Dendritic cell treated with granulocyte-macrophage colony-stimulating factor and Interleukin-4, amounts not matched to agents 40 ng/mL and 50 ng/mL, for 4 days (primary cell): ENCODE measurements at regions of chr16 and their contacts with region 1.

Region 1: GRCh38 chr16:19167710-19168370 is at the start of gene SYT17:
- H3K4me3 Mint-ChIP-seq: peak within 1 kb of the TSS; percentile 84
- H3K27ac Mint-ChIP-seq: peak within 1 kb of the TSS; percentile 79
- H3K4me1 Mint-ChIP-seq: peaks cover 23% of the 10 kb centered on the region
- H3K27me3 Mint-ChIP-seq: peaks cover 25% of the 10 kb centered on the region

Region 2: GRCh38 chr16:19130852-19131810 is 36.7 kb before region 1 on chr16:
- intact Hi-C with region 1: loop called (anchors 5 kb)
- H3K4me3 Mint-ChIP-seq: peak overlapping the region; percentile 61
- H3K27ac Mint-ChIP-seq: peak overlapping the region; percentile 93
- H3K4me1 Mint-ChIP-seq: peaks cover 74% of the 10 kb centered on the region
- H3K27me3 Mint-ChIP-seq: no peaks in the 10 kb centered on the region

Region 3: DNA sequence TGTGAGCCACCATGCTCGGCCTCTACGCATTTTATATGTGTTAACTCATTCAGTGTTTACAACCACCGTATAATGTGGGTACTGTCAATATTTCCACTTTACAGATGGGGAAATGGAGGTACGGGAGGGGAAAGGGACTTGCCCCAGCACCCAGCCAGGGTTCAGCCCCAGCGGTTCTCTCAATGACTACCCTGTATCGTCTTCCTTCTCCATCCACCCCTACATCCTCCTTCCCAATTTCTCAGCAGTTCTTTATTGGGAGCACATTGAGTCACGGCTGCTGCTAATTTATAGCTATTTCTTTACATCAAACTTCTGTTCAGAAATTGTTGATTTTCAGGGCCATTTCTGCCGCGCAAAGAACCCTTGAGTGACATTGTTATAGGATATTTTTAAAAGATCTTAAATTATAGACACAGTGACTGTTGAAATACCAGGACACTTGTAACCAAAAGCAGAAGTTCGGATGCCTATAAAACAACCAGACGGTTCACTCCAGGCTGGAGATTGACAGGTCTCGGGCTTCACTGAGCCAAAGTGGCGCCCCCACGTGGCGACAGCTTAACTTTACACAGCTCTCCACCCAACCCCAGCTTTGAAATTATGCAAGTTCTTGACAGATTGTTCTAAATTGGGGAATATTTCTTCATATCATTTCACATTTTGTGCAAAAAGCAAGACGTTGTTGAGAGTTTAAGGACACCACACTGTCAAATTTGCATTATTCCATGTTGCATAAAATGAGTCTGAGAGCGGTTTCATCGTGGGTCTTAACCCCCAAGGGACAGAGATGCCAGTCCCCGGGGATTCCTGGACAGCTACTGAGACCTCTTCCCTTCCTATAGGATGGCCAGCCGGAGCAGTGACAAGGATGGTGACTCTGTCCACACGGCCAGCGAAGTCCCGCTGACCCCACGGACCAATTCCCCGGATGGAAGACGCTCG is 12.0 kb after region 1 on chr16:
- intact Hi-C with region 1: loop called (anchors 1 kb)
- H3K4me3 Mint-ChIP-seq: peak overlapping the region; percentile 52
- H3K27ac Mint-ChIP-seq: peak overlapping the region; percentile 86
- H3K4me1 Mint-ChIP-seq: peaks cover 65% of the 10 kb centered on the region
- H3K27me3 Mint-ChIP-seq: no peaks in the 10 kb centered on the region

Region 4: DNA sequence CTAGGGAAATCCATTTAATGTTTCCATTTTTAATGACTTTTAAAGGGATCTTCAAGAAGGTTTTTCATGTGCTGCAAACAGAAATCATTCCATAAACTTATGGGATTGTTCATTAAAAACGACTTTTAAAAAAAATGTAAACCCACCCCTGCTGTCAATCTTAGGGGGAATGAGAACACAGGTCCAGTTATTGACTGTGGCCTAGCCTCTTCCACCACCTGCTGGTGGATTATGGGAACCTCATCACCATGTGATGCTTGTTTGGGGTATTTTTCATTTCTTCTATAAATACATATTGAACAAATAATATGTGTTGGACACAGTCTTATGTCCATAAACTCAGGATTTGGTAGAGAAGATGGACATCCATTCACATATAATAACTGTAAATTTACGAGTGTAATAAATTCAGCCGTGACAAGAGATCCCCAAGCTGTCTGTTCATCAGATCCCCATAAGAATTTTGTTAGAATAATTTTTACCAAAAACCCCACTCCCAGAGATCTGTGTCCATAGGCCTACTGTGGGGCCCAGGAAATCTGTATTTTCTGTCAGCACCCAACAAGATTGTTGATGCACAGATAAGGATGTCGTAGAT is 207.8 kb after region 1 on chr16:
- intact Hi-C with region 1: loop called (anchors 1 kb)
- H3K4me3 Mint-ChIP-seq: no peak overlapping the region
- H3K27ac Mint-ChIP-seq: no peak overlapping the region
- H3K4me1 Mint-ChIP-seq: no peaks in the 10 kb centered on the region
- H3K27me3 Mint-ChIP-seq: peaks cover 16% of the 10 kb centered on the region